ENCODE measurements at regions of chr3 and their contacts with region 1.

Region 1: GRCh38 chr3:154120961-154121700 is at the start of gene ARHGEF26:
- DNase-seq: peak; percentile 56
- ATAC-seq: peak; percentile 93
- H3K4me3 ChIP-seq: peak within 1 kb of the TSS; percentile 73
- H3K27ac ChIP-seq: no peak within 1 kb of the TSS; the same call in 1 of the 2 replicates
- H3K4me1 ChIP-seq: no peaks in the 10 kb centered on the region; the same call in 1 of the 2 replicates
- H3K27me3 ChIP-seq: no peaks in the 10 kb centered on the region; the same call in 1 of the 2 replicates
- CTCF ChIP-seq: no peak
- POLR2A ChIP-seq: no peak
- RAD21 ChIP-seq: no peak
- total RNA-seq, gene ARHGEF26: 2.0 and 3.1 TPM in 2 replicates

Region 2: GRCh38 chr3:154095832-154096421 is 25.2 kb before region 1 on chr3:
- CTCF ChIA-PET with region 1: no interaction called
- POLR2A ChIA-PET with region 1: no interaction called
- dilution Hi-C with region 1: no loop called
- in situ Hi-C with region 1: no loop called
- intact Hi-C with region 1: loop called (anchors 1 kb)
- DNase-seq: peak; percentile 55
- ATAC-seq: peak; percentile 72
- H3K4me3 ChIP-seq: no peak overlapping the region
- H3K27ac ChIP-seq: no peak overlapping the region
- H3K4me1 ChIP-seq: no peaks in the 10 kb centered on the region
- H3K27me3 ChIP-seq: 0 out of 2 replicates have a peak, but pooled peaks cover 2% of the 10 kb centered on the region
- CTCF ChIP-seq: peak; percentile 67
- POLR2A ChIP-seq: no peak
- RAD21 ChIP-seq: peak; percentile 70

Region 3: GRCh38 chr3:154228561-154229216 is 107.6 kb after region 1 on chr3:
- CTCF ChIA-PET with region 1: no interaction called
- POLR2A ChIA-PET with region 1: no interaction called
- dilution Hi-C with region 1: no loop called
- in situ Hi-C with region 1: no loop called
- intact Hi-C with region 1: loop called (anchors 2 kb)
- DNase-seq: peak; percentile 51
- ATAC-seq: peak; percentile 92
- H3K4me3 ChIP-seq: no peak overlapping the region
- H3K27ac ChIP-seq: peak overlapping the region; percentile 37; the same call in 1 of the 2 replicates
- H3K4me1 ChIP-seq: 0 out of 2 replicates have a peak, but pooled peaks cover 2% of the 10 kb centered on the region
- H3K27me3 ChIP-seq: no peaks in the 10 kb centered on the region
- CTCF ChIP-seq: no peak
- POLR2A ChIP-seq: no peak
- RAD21 ChIP-seq: no peak

Region 4: GRCh38 chr3:154304116-154304786 is 183.1 kb after region 1 on chr3:
- CTCF ChIA-PET with region 1: no interaction called
- POLR2A ChIA-PET with region 1: no interaction called
- dilution Hi-C with region 1: no loop called
- in situ Hi-C with region 1: no loop called
- intact Hi-C with region 1: no loop called
- DNase-seq: peak; percentile 59
- ATAC-seq: peak; percentile 88
- H3K4me3 ChIP-seq: no peak overlapping the region
- H3K27ac ChIP-seq: no peak overlapping the region
- H3K4me1 ChIP-seq: no peaks in the 10 kb centered on the region
- H3K27me3 ChIP-seq: no peaks in the 10 kb centered on the region
- CTCF ChIP-seq: no peak
- POLR2A ChIP-seq: no peak
- RAD21 ChIP-seq: no peak

Measured in IMR-90 (cell line).